ENCODE measurements at regions of chr17 and their contacts with region 1.

Region 1: DNA sequence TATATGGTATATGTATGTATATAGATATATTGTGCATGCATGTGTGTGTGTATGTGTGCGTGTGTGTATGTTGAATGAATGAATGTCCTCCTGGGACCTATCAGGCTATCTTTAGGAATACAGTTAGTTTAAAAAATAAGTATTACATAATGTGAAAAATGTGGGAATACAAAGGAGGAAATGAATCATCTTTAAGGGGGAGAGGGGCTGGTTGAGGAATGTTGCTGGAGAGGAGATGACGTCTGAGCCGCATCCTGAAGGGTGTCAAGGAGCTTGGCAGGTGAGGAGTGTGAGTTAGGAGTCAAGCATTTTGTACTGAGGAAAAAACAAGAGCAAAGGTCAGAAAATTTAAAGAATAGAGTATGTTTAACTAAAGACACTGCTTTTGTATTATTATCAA is 62.4 kb upstream of the NLK start:
- ATAC-seq: no peak
- H3K4me3 ChIP-seq: no peak overlapping the region
- H3K27ac ChIP-seq: no peak overlapping the region
- H3K4me1 ChIP-seq: no peaks in the 10 kb centered on the region

Region 2: GRCh38 chr17:27929990-27930389 is 50.1 kb before region 1 on chr17:
- in situ Hi-C with region 1: loop called in 1 of 9 experiments (anchors 10 kb)
- ATAC-seq: no peak
- H3K4me3 ChIP-seq: no peak overlapping the region
- H3K27ac ChIP-seq: no peak overlapping the region
- H3K4me1 ChIP-seq: no peaks in the 10 kb centered on the region

Measured in motor neuron (in vitro differentiated cells).